HepG2 (cell line): ENCODE measurements at regions of chr5 and their contacts with region 1.

Region 1: GRCh38 chr5:83564069-83564749 is 92.7 kb downstream of the VCAN start:
- DNase-seq: peak; percentile 50
- ATAC-seq: peak; percentile 69
- H3K4me3 ChIP-seq: peak overlapping the region in 1 of 3 experiments; percentile 7; a peak in 1 of 6 replicates
- H3K27ac ChIP-seq: no peak overlapping the region
- H3K4me1 ChIP-seq: peaks cover 22% of the 10 kb centered on the region
- H3K27me3 ChIP-seq: peaks cover 0 to 4% of the 10 kb centered on the region in 2 experiments; a peak in 1 of 5 replicates
- CTCF ChIP-seq: peak; percentile 65
- EP300 ChIP-seq: no peak
- POLR2A ChIP-seq: no peak
- RAD21 ChIP-seq: no peak

Region 2: DNA sequence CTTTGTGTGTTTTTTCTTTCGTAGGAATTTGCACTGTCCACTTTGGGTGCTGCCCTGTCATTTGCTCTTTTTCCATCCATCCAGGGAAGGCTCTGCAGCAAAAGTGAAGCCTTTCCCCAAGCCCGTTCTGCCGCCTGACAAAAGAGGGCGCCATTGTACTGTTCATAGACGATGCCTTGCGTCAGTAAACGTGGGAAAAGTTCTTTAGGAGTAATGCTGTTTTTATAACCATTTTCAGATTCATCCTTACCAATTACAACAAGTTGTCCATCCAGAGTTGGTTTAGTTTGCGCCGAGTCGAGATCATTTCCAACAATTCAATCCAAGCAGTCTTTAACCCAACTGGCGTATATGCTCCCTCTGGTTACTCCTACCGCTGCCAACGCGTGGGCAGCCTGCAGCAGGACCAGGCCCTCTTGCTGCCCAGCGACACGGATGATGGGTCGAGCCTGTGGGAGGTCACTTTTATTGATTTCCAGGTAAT is 1251.8 kb before region 1 on chr5:
- CTCF ChIA-PET with region 1: no interaction called
- POLR2A ChIA-PET with region 1: no interaction called
- in situ Hi-C with region 1: no loop called
- intact Hi-C with region 1: loop called (anchors 1 kb)
- DNase-seq: peak; percentile 50
- ATAC-seq: peak; percentile 84
- H3K4me3 ChIP-seq: no peak overlapping the region
- H3K27ac ChIP-seq: no peak overlapping the region
- H3K4me1 ChIP-seq: no peaks in the 10 kb centered on the region
- H3K27me3 ChIP-seq: no peaks in the 10 kb centered on the region
- CTCF ChIP-seq: peak; percentile 85
- EP300 ChIP-seq: no peak
- POLR2A ChIP-seq: no peak
- RAD21 ChIP-seq: peak; percentile 63

Region 3: DNA sequence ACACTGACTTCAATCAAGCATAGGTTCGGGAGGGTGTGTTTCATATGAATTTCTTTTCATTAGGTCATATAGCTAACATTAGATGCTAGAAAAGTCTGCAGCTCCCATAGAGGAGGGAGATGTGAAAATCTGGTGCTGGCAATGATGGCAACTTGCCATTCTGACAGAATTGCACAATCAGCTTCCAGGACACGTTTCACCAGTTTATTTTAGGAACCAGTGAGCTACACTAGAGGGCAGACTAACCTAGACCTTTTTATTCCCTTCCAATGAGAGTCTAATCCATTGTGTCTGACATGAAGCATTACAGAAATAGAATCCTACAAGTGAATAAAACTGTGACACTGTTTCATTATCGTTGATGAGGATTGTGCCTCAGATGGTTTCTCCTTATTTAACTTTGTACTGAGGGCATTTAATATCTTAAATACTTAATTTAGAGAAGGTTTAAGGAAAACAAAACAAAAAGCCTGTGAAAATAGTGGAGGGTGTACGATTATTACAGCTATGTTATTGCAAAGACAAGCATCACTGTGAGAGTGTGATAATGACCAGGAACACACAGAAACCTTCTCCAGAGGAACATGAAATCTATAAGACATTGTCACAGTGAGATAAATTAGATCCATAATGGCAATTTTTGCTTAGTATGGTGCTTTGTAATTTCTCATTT is 922.7 kb before region 1 on chr5:
- CTCF ChIA-PET with region 1: no interaction called
- POLR2A ChIA-PET with region 1: no interaction called
- in situ Hi-C with region 1: loop called (anchors 10 kb)
- intact Hi-C with region 1: loop called (anchors 1 kb)
- DNase-seq: peak; percentile 82
- ATAC-seq: peak; percentile 91
- H3K4me3 ChIP-seq: no peak overlapping the region
- H3K27ac ChIP-seq: no peak overlapping the region
- H3K4me1 ChIP-seq: peaks cover 20% of the 10 kb centered on the region
- H3K27me3 ChIP-seq: no peaks in the 10 kb centered on the region
- CTCF ChIP-seq: peak; percentile 86
- EP300 ChIP-seq: no peak; a peak in 1 of 4 replicates
- POLR2A ChIP-seq: no peak
- RAD21 ChIP-seq: peak; percentile 50; the same call in 1 of the 2 replicates

Region 4: DNA sequence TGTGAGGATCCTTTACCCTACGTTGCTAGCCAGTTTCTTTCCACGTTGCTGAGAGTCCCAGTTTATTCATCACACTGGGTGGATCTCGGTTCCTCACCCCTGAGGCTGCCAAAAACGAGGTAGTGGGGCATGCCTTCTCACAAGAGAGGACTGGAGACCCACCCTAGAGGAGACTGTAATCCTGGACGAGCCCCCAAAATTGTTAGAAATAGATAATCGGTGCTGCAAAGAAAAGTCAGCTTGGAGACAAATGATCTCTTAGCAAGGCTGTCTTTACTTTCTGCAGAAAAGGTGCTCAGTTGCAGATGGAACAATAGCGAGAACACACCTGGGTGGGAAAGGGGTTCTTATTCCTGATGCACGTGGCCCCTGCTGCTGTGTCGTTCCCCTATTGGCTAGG is 588.8 kb before region 1 on chr5:
- CTCF ChIA-PET with region 1: no interaction called
- POLR2A ChIA-PET with region 1: no interaction called
- in situ Hi-C with region 1: no loop called
- intact Hi-C with region 1: loop called (anchors 10 kb)
- DNase-seq: no peak
- ATAC-seq: no peak
- H3K4me3 ChIP-seq: no peak overlapping the region
- H3K27ac ChIP-seq: no peak overlapping the region
- H3K4me1 ChIP-seq: peaks cover 57% of the 10 kb centered on the region
- H3K27me3 ChIP-seq: no peaks in the 10 kb centered on the region
- CTCF ChIP-seq: no peak
- EP300 ChIP-seq: no peak
- POLR2A ChIP-seq: no peak
- RAD21 ChIP-seq: no peak

Region 5: DNA sequence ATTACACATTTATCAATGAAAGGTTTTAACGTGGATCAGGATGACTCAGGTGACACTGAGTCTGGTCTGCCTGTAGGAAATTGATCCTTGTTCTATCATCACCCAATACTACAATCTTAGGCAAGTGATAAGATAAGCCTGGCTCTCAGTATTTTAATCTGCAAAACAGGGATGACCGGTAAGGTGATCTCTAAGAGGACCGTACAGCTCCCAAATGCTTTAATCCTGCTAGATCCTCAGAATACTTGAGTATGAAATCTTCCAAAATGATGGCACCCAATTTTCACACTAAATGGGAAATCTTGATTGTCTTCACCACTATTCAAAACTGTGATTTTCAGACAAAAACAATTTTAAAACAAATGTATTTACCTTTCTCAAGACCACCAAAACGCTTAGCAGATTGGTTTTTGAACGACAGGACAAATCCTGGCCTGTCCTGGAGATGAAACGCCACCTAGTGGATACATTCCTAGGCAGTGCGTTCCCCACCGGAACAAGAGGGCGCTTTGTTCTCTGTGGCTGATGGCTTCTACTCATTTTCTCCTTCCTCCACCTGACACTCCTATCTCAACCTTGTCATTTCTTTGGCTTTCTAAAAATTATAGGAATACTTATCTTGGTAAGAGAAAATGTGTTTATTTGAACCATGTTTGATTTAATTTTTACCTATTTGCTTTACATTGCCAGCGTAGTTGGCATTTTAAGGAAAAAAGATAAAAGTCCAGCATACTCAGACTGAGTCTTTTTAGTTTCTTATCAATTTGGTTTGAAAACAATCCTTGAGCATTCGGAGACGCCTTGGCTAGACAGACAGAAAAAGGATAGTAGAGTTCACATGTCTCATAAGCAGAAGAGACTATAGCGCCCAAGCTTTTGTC is 133.8 kb before region 1 on chr5:
- CTCF ChIA-PET with region 1: no interaction called
- POLR2A ChIA-PET with region 1: no interaction called
- in situ Hi-C with region 1: no loop called
- intact Hi-C with region 1: loop called (anchors 2 kb)
- DNase-seq: peak; percentile 61
- ATAC-seq: peak; percentile 99
- H3K4me3 ChIP-seq: no peak overlapping the region
- H3K27ac ChIP-seq: no peak overlapping the region
- H3K4me1 ChIP-seq: no peaks in the 10 kb centered on the region
- H3K27me3 ChIP-seq: no peaks in the 10 kb centered on the region
- CTCF ChIP-seq: peak; percentile 90
- EP300 ChIP-seq: no peak
- POLR2A ChIP-seq: no peak
- RAD21 ChIP-seq: peak; percentile 66

Region 6: DNA sequence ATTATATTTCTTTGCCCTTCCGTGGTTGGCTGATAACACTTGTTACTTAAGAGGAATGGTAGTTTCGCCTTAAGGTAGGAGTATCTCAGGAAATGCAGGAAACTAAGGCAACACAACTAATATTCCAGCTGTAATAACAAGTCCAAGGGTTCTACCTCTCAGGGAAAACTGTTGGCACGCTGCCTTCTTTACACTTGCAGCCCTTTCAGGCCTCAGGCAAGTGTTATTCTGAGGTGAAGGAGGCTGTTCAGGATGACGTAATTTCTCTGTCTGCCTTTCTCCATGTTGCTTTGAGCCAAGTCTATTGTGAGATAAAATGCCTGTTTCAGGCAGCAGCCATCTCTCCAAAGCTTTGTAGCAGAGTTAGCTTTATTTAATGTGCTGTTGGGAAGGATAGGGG is 54.7 kb before region 1 on chr5:
- CTCF ChIA-PET with region 1: no interaction called
- POLR2A ChIA-PET with region 1: no interaction called
- in situ Hi-C with region 1: no loop called
- intact Hi-C with region 1: no loop called
- DNase-seq: no peak
- ATAC-seq: no peak
- H3K4me3 ChIP-seq: no peak overlapping the region
- H3K27ac ChIP-seq: no peak overlapping the region
- H3K4me1 ChIP-seq: no peaks in the 10 kb centered on the region
- H3K27me3 ChIP-seq: no peaks in the 10 kb centered on the region
- CTCF ChIP-seq: no peak
- EP300 ChIP-seq: no peak
- POLR2A ChIP-seq: no peak
- RAD21 ChIP-seq: no peak

Region 7: GRCh38 chr5:83577036-83577636 is 12.9 kb after region 1 on chr5:
- CTCF ChIA-PET with region 1: interaction called, 3 read pairs
- POLR2A ChIA-PET with region 1: interaction called, 4 read pairs
- in situ Hi-C with region 1: no loop called
- intact Hi-C with region 1: loop called (anchors 1 kb)
- DNase-seq: peak; percentile 91
- ATAC-seq: peak; percentile 69
- H3K4me3 ChIP-seq: no peak overlapping the region; a peak in 1 of 6 replicates
- H3K27ac ChIP-seq: no peak overlapping the region
- H3K4me1 ChIP-seq: peaks cover 16% of the 10 kb centered on the region
- H3K27me3 ChIP-seq: peaks cover 0 to 4% of the 10 kb centered on the region in 2 experiments; a peak in 2 of 5 replicates
- CTCF ChIP-seq: no peak
- EP300 ChIP-seq: peak in 1 of 2 experiments; percentile 90; a peak in 2 of 4 replicates
- POLR2A ChIP-seq: no peak
- RAD21 ChIP-seq: no peak